MCF 10A (cell line): ENCODE measurements at regions of chrX and their contacts with region 1.

Region 1: GRCh38 chrX:103442536-103442901 is 66.2 kb downstream of the BEX3 start:
- DNase-seq: peak; percentile 79
- H3K4me3 Mint-ChIP-seq: peak overlapping the region; percentile 5
- H3K27ac Mint-ChIP-seq: peak overlapping the region; percentile 49
- H3K4me1 Mint-ChIP-seq: peaks cover 16% of the 10 kb centered on the region
- H3K27me3 Mint-ChIP-seq: no peaks in the 10 kb centered on the region
- CTCF ChIP-seq: no peak

Region 2: DNA sequence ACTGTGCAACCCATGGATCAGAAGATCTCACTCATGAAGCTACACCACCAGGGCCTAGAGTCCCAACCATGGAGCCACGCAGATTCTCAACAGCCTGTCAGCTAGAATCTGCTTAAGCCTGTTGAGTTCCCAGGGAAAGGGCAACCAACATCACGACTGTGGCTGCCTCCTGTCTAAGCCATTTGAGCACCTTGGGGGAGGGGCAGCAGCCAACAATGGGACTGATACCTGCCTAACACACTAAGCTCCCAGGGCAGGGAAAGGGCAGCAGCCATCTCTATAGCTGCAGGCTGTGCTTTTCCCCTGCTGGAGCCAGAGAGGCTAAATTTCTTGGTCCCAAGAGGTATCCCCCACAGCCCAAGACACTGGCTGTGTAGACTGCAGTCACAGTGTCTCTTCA is 1413.5 kb before region 1 on chrX:
- CTCF ChIA-PET with region 1: no interaction called
- POLR2A ChIA-PET with region 1: no interaction called
- intact Hi-C with region 1: no loop called
- DNase-seq: no peak
- H3K4me3 Mint-ChIP-seq: no peak overlapping the region
- H3K27ac Mint-ChIP-seq: no peak overlapping the region
- H3K4me1 Mint-ChIP-seq: no peaks in the 10 kb centered on the region
- H3K27me3 Mint-ChIP-seq: peaks cover 8% of the 10 kb centered on the region
- CTCF ChIP-seq: no peak

Region 3: GRCh38 chrX:103101280-103102042 is 341.1 kb before region 1 on chrX:
- CTCF ChIA-PET with region 1: no interaction called
- POLR2A ChIA-PET with region 1: no interaction called
- intact Hi-C with region 1: no loop called
- DNase-seq: no peak
- H3K4me3 Mint-ChIP-seq: no peak overlapping the region
- H3K27ac Mint-ChIP-seq: no peak overlapping the region
- H3K4me1 Mint-ChIP-seq: no peaks in the 10 kb centered on the region
- H3K27me3 Mint-ChIP-seq: peaks cover 35% of the 10 kb centered on the region
- CTCF ChIP-seq: no peak

Region 4: GRCh38 chrX:103398421-103398864 is 44.1 kb before region 1 on chrX:
- CTCF ChIA-PET with region 1: interaction called, 3 read pairs
- POLR2A ChIA-PET with region 1: interaction called, 11 read pairs
- intact Hi-C with region 1: loop called (anchors 5 kb)
- DNase-seq: peak; percentile 80
- H3K4me3 Mint-ChIP-seq: no peak overlapping the region
- H3K27ac Mint-ChIP-seq: peak overlapping the region; percentile 35
- H3K4me1 Mint-ChIP-seq: no peaks in the 10 kb centered on the region
- H3K27me3 Mint-ChIP-seq: peaks cover 31% of the 10 kb centered on the region
- CTCF ChIP-seq: no peak

Region 5: GRCh38 chrX:103453655-103454054 is 11.1 kb after region 1 on chrX:
- CTCF ChIA-PET with region 1: no interaction called
- POLR2A ChIA-PET with region 1: no interaction called
- intact Hi-C with region 1: loop called (anchors 1 kb)
- DNase-seq: peak; percentile 90
- H3K4me3 Mint-ChIP-seq: peak overlapping the region; percentile 30
- H3K27ac Mint-ChIP-seq: peak overlapping the region; percentile 87
- H3K4me1 Mint-ChIP-seq: peaks cover 4% of the 10 kb centered on the region
- H3K27me3 Mint-ChIP-seq: no peaks in the 10 kb centered on the region
- CTCF ChIP-seq: no peak